Gastrocnemius medialis (tissue), 4 donors: ENCODE measurements at regions of chr1 and their contacts with region 1.

Region 1: GRCh38 chr1:167114725-167115124 is 20.9 kb downstream of the STYXL2 start:
- DNase-seq: no peak
- ATAC-seq: no peak
- H3K4me3 ChIP-seq: no peak overlapping the region
- H3K27ac ChIP-seq: peak overlapping the region in 3 of 4 donors; percentile 58 to 83 (median 78)
- H3K4me1 ChIP-seq: peaks cover 11 to 32% of the 10 kb centered on the region in 2 donors
- H3K27me3 ChIP-seq: no peaks in the 10 kb centered on the region
- CTCF ChIP-seq: no peak
- POLR2A ChIP-seq: no peak

Region 2: GRCh38 chr1:167082511-167083027 is 32.2 kb before region 1 on chr1:
- in situ Hi-C with region 1: no loop called
- intact Hi-C with region 1: loop called (anchors 5 kb)
- DNase-seq: no peak
- ATAC-seq: peak; percentile 60 to 79
- H3K4me3 ChIP-seq: no peak overlapping the region
- H3K27ac ChIP-seq: no peak overlapping the region
- H3K4me1 ChIP-seq: peaks cover 22 to 23% of the 10 kb centered on the region in 2 donors
- H3K27me3 ChIP-seq: no peaks in the 10 kb centered on the region
- CTCF ChIP-seq: no peak
- POLR2A ChIP-seq: no peak

Region 3: GRCh38 chr1:167227934-167228378 is 113.2 kb after region 1 on chr1:
- in situ Hi-C with region 1: no loop called
- intact Hi-C with region 1: no loop called
- DNase-seq: no peak
- ATAC-seq: no peak
- H3K4me3 ChIP-seq: no peak overlapping the region
- H3K27ac ChIP-seq: no peak overlapping the region
- H3K4me1 ChIP-seq: peaks cover 43 to 69% of the 10 kb centered on the region in 2 donors
- H3K27me3 ChIP-seq: no peaks in the 10 kb centered on the region
- CTCF ChIP-seq: no peak
- POLR2A ChIP-seq: no peak